GM12878 (cell line): ENCODE measurements at regions of chr5 and their contacts with region 1.

Region 1: DNA sequence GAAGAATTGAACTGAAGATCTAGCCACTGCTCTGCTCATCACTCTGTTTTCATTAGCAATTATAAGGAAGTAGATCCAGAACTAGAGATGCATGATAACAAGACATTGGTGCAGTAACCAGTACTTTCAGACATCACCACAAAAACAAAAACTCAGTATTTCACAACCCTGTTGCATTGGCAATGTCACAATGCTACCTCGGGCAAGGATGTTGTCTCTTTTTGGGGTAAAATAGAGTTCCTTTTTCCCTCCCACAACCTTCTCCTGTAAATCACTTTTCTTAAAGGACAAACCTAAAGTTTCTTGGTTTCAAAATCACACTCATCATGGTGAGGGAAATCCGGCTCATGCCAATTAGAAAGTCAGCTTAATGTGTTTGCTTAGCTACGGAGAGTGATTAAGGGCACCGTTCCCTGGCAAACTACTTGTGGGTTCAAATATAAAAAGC is 420.1 kb upstream of the MEF2C start:
- DNase-seq: peak; percentile 84
- ATAC-seq: peak; percentile 75
- H3K4me3 ChIP-seq: peak overlapping the region; percentile 16; the same call in 1 of the 2 replicates
- H3K27ac ChIP-seq: peak overlapping the region; percentile 78
- H3K4me1 ChIP-seq: peaks cover 37% of the 10 kb centered on the region
- H3K27me3 ChIP-seq: no peaks in the 10 kb centered on the region
- CTCF ChIP-seq: no peak
- EP300 ChIP-seq: peak in 1 of 2 experiments; percentile 40; a peak in 1 of 4 replicates
- POLR2A ChIP-seq: no peak
- RAD21 ChIP-seq: no peak; the same call in 1 of the 2 replicates

Region 2: DNA sequence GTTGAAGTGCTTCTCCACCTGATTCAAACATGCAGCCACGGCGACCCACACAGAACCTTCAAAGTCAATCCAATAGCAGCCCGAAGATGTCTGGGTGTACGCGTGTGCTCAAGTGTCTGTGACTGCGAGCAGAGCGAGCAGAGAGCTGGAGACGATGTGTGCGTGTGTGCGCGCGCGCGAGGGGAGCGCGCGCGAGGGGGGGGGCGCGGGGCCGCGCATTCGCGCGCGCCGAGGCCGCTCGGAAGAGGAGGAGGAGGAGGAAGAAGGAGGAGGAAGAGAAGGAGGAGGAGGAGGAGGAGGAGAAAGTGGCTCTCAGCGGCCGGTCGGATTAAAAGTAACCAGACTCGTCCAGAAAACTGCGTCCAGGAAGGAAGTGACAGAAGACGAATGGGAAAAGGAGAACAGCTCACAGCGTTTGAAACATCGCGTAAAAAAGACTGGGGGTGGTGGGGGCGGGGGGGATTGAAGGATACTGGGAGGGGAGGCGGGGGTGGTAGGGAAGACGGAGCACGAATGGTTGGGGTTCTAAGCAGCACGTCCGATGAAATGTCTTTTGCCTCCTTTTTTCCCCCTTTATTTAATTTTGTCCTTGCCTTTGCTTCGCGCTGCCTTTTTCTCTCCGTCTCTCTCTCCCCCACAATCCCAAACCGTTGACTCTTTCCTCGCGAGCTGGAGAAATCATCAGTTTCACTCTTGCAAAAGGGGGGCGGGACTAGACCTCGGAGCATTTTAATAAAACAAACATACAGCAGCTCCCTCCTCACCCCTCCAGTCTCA is 419.8 kb before region 1 on chr5 and contains the start of gene MEF2C:
- CTCF ChIA-PET with region 1: no interaction called
- POLR2A ChIA-PET with region 1: no interaction called
- RAD21 ChIA-PET with region 1: interaction called, 8 read pairs
- SMC1A ChIA-PET with region 1: interaction called, 3 read pairs
- in situ Hi-C with region 1: loop called (anchors 10 kb)
- intact Hi-C with region 1: loop called (anchors 2 kb)
- DNase-seq: no peak
- ATAC-seq: peak; percentile 45
- H3K4me3 ChIP-seq: peak within 1 kb of the TSS; percentile 85
- H3K27ac ChIP-seq: peak within 1 kb of the TSS; percentile 98
- H3K4me1 ChIP-seq: peaks cover 3% of the 10 kb centered on the region
- H3K27me3 ChIP-seq: no peaks in the 10 kb centered on the region
- CTCF ChIP-seq: no peak
- EP300 ChIP-seq: no peak
- POLR2A ChIP-seq: peak; percentile 94
- RAD21 ChIP-seq: no peak
- polyA plus RNA-seq, gene MEF2C: 143 to 147 TPM

Region 3: DNA sequence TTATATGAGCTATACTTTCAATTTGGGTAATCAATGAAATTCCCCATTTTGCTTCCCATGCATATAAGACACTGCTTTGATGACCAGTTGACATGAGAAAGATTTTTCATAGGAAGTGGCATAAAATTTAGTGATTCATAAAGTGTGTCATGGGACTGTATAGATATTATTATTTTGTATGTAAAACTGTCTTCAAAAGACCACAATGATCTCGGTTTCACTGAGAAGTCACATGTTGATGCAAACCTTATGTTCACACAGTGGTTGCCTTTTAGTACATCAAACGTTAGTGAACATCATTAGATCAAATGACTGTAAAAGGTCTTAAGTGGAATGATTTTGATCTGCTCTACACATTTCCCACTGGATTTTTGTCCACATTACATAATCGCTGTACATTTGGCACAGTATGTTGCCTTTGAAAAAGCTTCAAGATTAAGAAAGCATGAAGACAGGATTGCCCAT is 70.9 kb before region 1 on chr5:
- CTCF ChIA-PET with region 1: interaction called, 4 read pairs
- POLR2A ChIA-PET with region 1: interaction called, 5 read pairs
- RAD21 ChIA-PET with region 1: interaction called, 25 read pairs
- SMC1A ChIA-PET with region 1: interaction called, 40 read pairs
- in situ Hi-C with region 1: loop called (anchors 5 kb)
- intact Hi-C with region 1: loop called (anchors 2 kb)
- DNase-seq: peak; percentile 96
- ATAC-seq: peak; percentile 90
- H3K4me3 ChIP-seq: 0 out of 2 replicates have a peak overlapping the region, but pooled peaks have one; percentile 25
- H3K27ac ChIP-seq: peak overlapping the region; percentile 97
- H3K4me1 ChIP-seq: peaks cover 43% of the 10 kb centered on the region
- H3K27me3 ChIP-seq: no peaks in the 10 kb centered on the region
- CTCF ChIP-seq: no peak
- EP300 ChIP-seq: peak; percentile 96 to 98
- POLR2A ChIP-seq: no peak
- RAD21 ChIP-seq: no peak

Region 4: GRCh38 chr5:89313804-89314588 is 10.9 kb after region 1 on chr5:
- CTCF ChIA-PET with region 1: interaction called, 7 read pairs
- POLR2A ChIA-PET with region 1: interaction called, 22 read pairs
- RAD21 ChIA-PET with region 1: interaction called, 64 read pairs
- SMC1A ChIA-PET with region 1: interaction called, 87 read pairs
- in situ Hi-C with region 1: no loop called
- intact Hi-C with region 1: loop called (anchors 1 kb)
- DNase-seq: peak; percentile 99
- ATAC-seq: peak; percentile 96
- H3K4me3 ChIP-seq: no peak overlapping the region
- H3K27ac ChIP-seq: peak overlapping the region; percentile 97
- H3K4me1 ChIP-seq: peaks cover 40% of the 10 kb centered on the region
- H3K27me3 ChIP-seq: no peaks in the 10 kb centered on the region
- CTCF ChIP-seq: no peak
- EP300 ChIP-seq: peak; percentile 95 to 98
- POLR2A ChIP-seq: peak; percentile 36; the same call in 1 of the 2 replicates
- RAD21 ChIP-seq: peak; percentile 40

Region 5: DNA sequence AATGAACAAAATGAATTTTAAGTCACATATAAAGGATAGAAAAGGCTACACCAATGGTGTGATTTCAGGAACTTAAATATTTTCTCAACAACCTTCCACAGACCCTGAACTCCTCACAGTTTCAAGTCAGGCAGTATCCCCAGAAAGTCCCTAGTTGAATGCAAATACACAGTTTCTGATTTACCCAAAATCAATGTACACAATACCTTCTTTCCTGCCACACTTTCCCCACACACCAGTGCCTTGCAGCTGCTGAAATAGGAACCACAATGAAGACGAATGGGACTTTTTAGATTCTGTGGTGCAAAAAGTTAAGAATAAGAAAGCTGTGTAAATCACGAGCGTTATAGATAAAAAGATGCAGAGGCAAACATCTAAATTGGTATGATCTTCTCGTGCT is 132.3 kb after region 1 on chr5:
- CTCF ChIA-PET with region 1: interaction called, 3 read pairs
- POLR2A ChIA-PET with region 1: interaction called, 4 read pairs
- RAD21 ChIA-PET with region 1: interaction called, 26 read pairs
- SMC1A ChIA-PET with region 1: interaction called, 19 read pairs
- in situ Hi-C with region 1: no loop called
- intact Hi-C with region 1: loop called (anchors 2 kb)
- DNase-seq: peak; percentile 90
- ATAC-seq: peak; percentile 88
- H3K4me3 ChIP-seq: 0 out of 2 replicates have a peak overlapping the region, but pooled peaks have one; percentile 41
- H3K27ac ChIP-seq: peak overlapping the region; percentile 92
- H3K4me1 ChIP-seq: peaks cover 29% of the 10 kb centered on the region; the same call in 1 of the 2 replicates
- H3K27me3 ChIP-seq: no peaks in the 10 kb centered on the region
- CTCF ChIP-seq: 0 out of 6 replicates have a peak, but pooled peaks of 1 of the 3 experiments have one; percentile 3
- EP300 ChIP-seq: peak; percentile 50 to 87; a peak in 2 of 4 replicates
- POLR2A ChIP-seq: 0 out of 2 replicates have a peak, but pooled peaks have one; percentile 28
- RAD21 ChIP-seq: peak; percentile 53

Region 6: GRCh38 chr5:89471541-89471940 is 168.5 kb after region 1 on chr5:
- CTCF ChIA-PET with region 1: no interaction called
- POLR2A ChIA-PET with region 1: no interaction called
- RAD21 ChIA-PET with region 1: no interaction called
- SMC1A ChIA-PET with region 1: no interaction called
- in situ Hi-C with region 1: no loop called
- intact Hi-C with region 1: no loop called
- DNase-seq: no peak
- ATAC-seq: no peak
- H3K4me3 ChIP-seq: no peak overlapping the region
- H3K27ac ChIP-seq: no peak overlapping the region
- H3K4me1 ChIP-seq: no peaks in the 10 kb centered on the region
- H3K27me3 ChIP-seq: no peaks in the 10 kb centered on the region
- CTCF ChIP-seq: no peak
- EP300 ChIP-seq: no peak
- POLR2A ChIP-seq: no peak
- RAD21 ChIP-seq: no peak

Region 7: GRCh38 chr5:90264689-90265544 is 961.9 kb after region 1 on chr5:
- CTCF ChIA-PET with region 1: no interaction called
- POLR2A ChIA-PET with region 1: no interaction called
- RAD21 ChIA-PET with region 1: no interaction called
- SMC1A ChIA-PET with region 1: no interaction called
- in situ Hi-C with region 1: no loop called
- intact Hi-C with region 1: loop called (anchors 5 kb)
- DNase-seq: peak; percentile 41
- ATAC-seq: peak; percentile 88
- H3K4me3 ChIP-seq: peak overlapping the region; percentile 26; the same call in 1 of the 2 replicates
- H3K27ac ChIP-seq: no peak overlapping the region
- H3K4me1 ChIP-seq: peaks cover 5% of the 10 kb centered on the region
- H3K27me3 ChIP-seq: no peaks in the 10 kb centered on the region
- CTCF ChIP-seq: peak; percentile 89 to 96 (median 92)
- EP300 ChIP-seq: no peak
- POLR2A ChIP-seq: no peak
- RAD21 ChIP-seq: peak; percentile 99